Activated CD4-positive, alpha-beta memory T cell treated with anti-CD3 and anti-CD28 coated beads for 36 hours (primary cell): ENCODE measurements at regions of chr13 and their contacts with region 1.

Region 1: GRCh38 chr13:98653463-98653985 is 76.6 kb upstream of the STK24 start:
- DNase-seq: peak; percentile 85
- H3K4me3 Mint-ChIP-seq: no peak overlapping the region
- H3K27ac Mint-ChIP-seq: no peak overlapping the region
- H3K4me1 Mint-ChIP-seq: peaks cover 5% of the 10 kb centered on the region
- H3K27me3 Mint-ChIP-seq: peaks cover 4% of the 10 kb centered on the region

Region 2: DNA sequence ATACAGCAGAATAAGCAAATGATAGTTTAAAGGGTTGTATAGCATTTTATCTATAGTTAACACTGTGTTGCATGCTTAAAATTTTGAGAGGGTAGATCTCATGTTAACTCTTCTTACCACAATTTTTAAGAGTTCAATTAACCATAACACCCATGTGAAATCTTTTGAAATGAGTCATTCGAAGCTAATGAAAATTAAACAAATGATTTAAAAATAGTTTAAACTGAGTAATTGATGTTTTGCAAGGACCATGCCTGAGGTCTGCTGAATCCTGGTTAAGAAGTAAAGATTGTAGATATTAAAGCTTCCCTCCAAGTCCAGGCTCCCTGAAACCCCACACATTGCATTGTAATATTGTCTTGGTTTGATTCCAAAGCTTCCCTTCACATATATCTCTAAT is 299.8 kb before region 1 on chr13:
- CTCF ChIA-PET with region 1: no interaction called
- POLR2A ChIA-PET with region 1: no interaction called
- intact Hi-C with region 1: no loop called
- DNase-seq: no peak
- H3K4me3 Mint-ChIP-seq: no peak overlapping the region
- H3K27ac Mint-ChIP-seq: no peak overlapping the region
- H3K4me1 Mint-ChIP-seq: no peaks in the 10 kb centered on the region
- H3K27me3 Mint-ChIP-seq: no peaks in the 10 kb centered on the region

Region 3: GRCh38 chr13:98454389-98454881 is 199.1 kb before region 1 on chr13:
- CTCF ChIA-PET with region 1: interaction called, 30 read pairs
- POLR2A ChIA-PET with region 1: interaction called, 3 read pairs
- intact Hi-C with region 1: loop called (anchors 1 kb)
- DNase-seq: no peak
- H3K4me3 Mint-ChIP-seq: no peak overlapping the region
- H3K27ac Mint-ChIP-seq: peak overlapping the region; percentile 58
- H3K4me1 Mint-ChIP-seq: peaks cover 20% of the 10 kb centered on the region
- H3K27me3 Mint-ChIP-seq: no peaks in the 10 kb centered on the region

Region 4: GRCh38 chr13:98476538-98476966 is 177.0 kb before region 1 on chr13:
- CTCF ChIA-PET with region 1: interaction called, 41 read pairs
- POLR2A ChIA-PET with region 1: no interaction called
- intact Hi-C with region 1: no loop called
- DNase-seq: peak; percentile 96
- H3K4me3 Mint-ChIP-seq: peak overlapping the region; percentile 62
- H3K27ac Mint-ChIP-seq: peak overlapping the region; percentile 91
- H3K4me1 Mint-ChIP-seq: peaks cover 62% of the 10 kb centered on the region
- H3K27me3 Mint-ChIP-seq: no peaks in the 10 kb centered on the region

Region 5: DNA sequence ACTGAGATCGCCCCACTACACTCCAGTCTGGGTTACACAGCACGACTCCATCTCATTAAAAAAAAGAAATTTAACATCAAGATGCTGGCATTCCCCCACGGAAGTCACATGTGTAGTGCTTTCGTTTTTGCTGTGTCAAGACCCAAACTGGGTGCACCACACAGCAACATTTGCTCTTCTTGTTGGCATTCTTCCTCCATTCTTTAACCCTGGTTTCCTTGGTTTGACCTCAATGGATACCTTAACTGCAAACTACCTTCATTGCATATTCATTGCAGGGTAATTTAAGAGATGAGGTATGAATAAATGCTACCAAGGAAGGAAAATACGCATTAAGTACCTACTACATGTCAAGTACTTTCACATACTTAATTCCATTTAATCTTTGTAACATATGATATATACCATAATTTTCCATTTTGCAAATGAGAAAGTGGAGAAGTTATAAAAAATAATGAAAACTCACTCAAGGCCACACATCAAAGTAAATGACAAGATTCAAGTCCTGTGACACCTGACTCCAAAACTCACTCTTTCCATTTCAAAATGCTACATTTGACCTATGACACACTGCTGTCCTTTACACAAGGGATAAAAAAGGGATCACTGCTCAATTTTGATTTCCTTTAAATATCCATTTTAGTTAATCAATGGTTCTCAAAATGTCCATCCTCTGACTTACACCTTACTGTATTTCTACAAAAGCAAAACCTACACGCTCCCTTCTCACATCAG is 135.8 kb before region 1 on chr13:
- CTCF ChIA-PET with region 1: interaction called, 12 read pairs
- POLR2A ChIA-PET with region 1: no interaction called
- intact Hi-C with region 1: no loop called
- DNase-seq: peak; percentile 75
- H3K4me3 Mint-ChIP-seq: peak overlapping the region; percentile 53
- H3K27ac Mint-ChIP-seq: peak overlapping the region; percentile 93
- H3K4me1 Mint-ChIP-seq: peaks cover 98% of the 10 kb centered on the region
- H3K27me3 Mint-ChIP-seq: no peaks in the 10 kb centered on the region

Region 6: DNA sequence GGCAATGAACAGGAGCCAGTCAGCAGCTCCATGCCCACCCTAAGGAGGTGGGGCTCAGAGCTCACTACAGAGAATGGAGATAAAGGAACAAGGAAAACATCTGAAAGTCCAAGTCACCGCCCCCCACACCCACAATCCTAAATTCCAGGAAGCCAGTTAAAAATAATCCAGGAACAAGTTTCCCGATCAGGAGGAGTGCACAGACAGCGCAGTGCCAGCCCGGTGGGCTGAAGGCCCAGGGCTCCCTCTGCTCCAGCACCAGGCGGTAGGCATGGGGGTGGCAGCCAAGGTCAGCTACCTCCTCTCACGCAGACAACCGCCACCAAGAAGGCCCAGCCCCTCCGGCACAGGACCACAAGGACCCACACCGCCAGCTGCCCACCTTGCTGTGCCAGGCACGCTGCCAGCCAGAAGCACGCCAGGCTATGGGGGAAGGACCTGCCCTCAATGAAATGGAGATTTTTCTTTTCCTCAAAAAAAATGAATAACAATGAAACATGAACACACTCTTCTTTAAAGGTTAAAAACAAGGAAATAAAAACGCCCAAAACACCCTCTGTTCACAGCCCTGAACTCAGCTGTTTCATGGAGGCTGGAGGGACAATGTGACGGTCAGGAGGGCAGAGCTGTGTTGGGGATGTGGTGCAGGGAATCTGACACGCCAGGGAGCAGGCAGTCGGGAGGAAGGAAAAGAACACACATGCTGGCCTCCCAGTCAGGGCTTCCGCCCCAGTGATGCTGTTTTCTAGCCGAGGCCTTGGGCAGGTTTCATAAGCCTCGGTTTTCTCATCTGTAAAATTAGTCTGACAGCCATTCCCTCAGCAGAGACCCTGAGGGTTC is 87.6 kb before region 1 on chr13:
- CTCF ChIA-PET with region 1: interaction called, 12 read pairs
- POLR2A ChIA-PET with region 1: no interaction called
- intact Hi-C with region 1: no loop called
- DNase-seq: no peak
- H3K4me3 Mint-ChIP-seq: peak overlapping the region; percentile 54
- H3K27ac Mint-ChIP-seq: peak overlapping the region; percentile 98
- H3K4me1 Mint-ChIP-seq: peaks cover 88% of the 10 kb centered on the region
- H3K27me3 Mint-ChIP-seq: no peaks in the 10 kb centered on the region

Region 7: GRCh38 chr13:98672944-98673545 is 19.5 kb after region 1 on chr13:
- CTCF ChIA-PET with region 1: interaction called, 31 read pairs
- POLR2A ChIA-PET with region 1: no interaction called
- intact Hi-C with region 1: loop called (anchors 2 kb)
- DNase-seq: peak; percentile 58
- H3K4me3 Mint-ChIP-seq: no peak overlapping the region
- H3K27ac Mint-ChIP-seq: no peak overlapping the region
- H3K4me1 Mint-ChIP-seq: no peaks in the 10 kb centered on the region
- H3K27me3 Mint-ChIP-seq: peaks cover 2% of the 10 kb centered on the region